ENCODE measurements at regions of chr6 and their contacts with region 1.

Region 1: DNA sequence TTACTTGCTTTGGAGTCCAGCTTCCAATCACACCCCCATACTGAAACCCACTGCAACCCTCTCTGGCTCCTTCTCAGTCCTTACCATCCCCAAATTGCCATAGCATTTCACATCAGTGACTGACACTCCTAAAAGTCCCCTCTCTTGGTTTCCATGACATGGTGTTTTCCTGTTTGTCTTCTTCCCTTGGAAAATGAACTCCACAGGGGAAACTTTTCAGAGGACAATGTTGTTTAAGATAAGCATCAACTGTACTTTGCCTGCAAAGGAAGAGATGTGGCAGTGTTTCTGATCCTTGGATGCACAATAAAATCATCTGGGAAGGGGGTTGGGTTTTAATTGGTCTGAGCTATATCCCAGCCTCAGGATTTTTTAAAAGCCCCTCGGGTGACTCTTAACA is 214.9 kb downstream of the HACE1 start:
- DNase-seq: no peak
- H3K4me3 ChIP-seq: no peak overlapping the region
- H3K27ac ChIP-seq: no peak overlapping the region
- H3K4me1 ChIP-seq: peaks cover 6% of the 10 kb centered on the region
- H3K27me3 ChIP-seq: no peaks in the 10 kb centered on the region
- CTCF ChIP-seq: no peak

Region 2: DNA sequence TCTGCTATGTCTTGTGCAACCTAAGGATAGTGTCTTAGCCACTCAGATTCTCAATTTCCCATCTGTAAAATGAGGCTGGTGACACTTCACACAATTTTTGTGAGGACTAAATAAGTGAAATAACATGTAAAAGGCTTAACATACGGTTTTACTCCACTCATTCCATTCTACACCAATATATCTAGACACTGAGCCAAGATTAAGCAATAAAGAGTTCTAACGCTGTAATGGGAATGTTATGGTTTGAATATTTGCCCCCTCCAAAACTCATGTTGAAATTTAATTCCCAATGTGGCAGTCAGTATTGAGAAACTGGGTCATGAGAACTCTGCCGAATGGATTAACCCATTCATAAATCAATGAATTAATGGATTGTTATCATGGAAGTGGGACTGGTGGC is 86.1 kb before region 1 on chr6:
- CTCF ChIA-PET with region 1: no interaction called
- dilution Hi-C with region 1: loop called (anchors 5 kb)
- in situ Hi-C with region 1: no loop called
- intact Hi-C with region 1: no loop called
- DNase-seq: no peak
- H3K4me3 ChIP-seq: no peak overlapping the region
- H3K27ac ChIP-seq: no peak overlapping the region
- H3K4me1 ChIP-seq: no peaks in the 10 kb centered on the region
- H3K27me3 ChIP-seq: no peaks in the 10 kb centered on the region
- CTCF ChIP-seq: no peak

Measured in mammary epithelial cell (primary cell).